ENCODE measurements at regions of chr7 and their contacts with region 1.

Region 1: DNA sequence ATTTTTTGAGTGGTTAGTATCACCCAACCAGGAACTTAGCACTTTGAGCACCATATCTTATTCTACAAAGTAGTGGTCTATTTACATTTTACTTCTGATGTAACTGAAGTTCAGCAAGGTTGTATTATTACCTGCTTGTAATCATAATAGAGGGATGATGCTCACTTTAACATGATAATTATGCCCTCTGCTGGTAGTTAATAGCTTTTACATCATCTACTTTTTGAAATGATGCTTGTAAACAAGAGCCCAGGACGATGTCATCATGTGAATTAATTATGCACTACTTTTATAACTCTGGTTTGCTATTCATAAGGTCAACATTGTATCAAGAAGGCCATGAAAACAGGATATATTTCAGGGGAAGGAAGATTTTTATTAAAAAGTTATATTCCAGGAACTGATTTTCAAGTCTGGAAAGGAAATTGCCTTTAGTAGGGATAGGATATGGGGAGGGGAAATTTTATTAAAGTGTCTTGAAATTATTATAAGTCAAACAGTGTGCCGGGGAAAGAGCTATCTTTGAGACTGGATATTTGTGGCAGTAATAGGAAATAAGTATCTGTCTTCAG is 80.3 kb upstream of the SCIN start:
- DNase-seq: no peak
- ATAC-seq: no peak

Region 2: GRCh38 chr7:11427686-11428273 is 1062.4 kb before region 1 on chr7:
- intact Hi-C with region 1: loop called (anchors 5 kb)
- DNase-seq: no peak
- ATAC-seq: no peak

Region 3: GRCh38 chr7:12067141-12067831 is 422.9 kb before region 1 on chr7:
- intact Hi-C with region 1: loop called (anchors 10 kb)
- DNase-seq: no peak
- ATAC-seq: no peak

Region 4: GRCh38 chr7:12119620-12120303 is 370.4 kb before region 1 on chr7:
- intact Hi-C with region 1: no loop called
- DNase-seq: no peak
- ATAC-seq: no peak

Region 5: GRCh38 chr7:12436896-12437535 is 53.2 kb before region 1 on chr7:
- intact Hi-C with region 1: loop called (anchors 2 kb)
- DNase-seq: no peak
- ATAC-seq: no peak

Region 6: GRCh38 chr7:12458520-12459131 is 31.6 kb before region 1 on chr7:
- intact Hi-C with region 1: loop called (anchors 5 kb)
- DNase-seq: no peak
- ATAC-seq: no peak

Region 7: GRCh38 chr7:12570534-12571461 is 80.6 kb after region 1 on chr7 and contains the start of gene SCIN:
- intact Hi-C with region 1: no loop called
- DNase-seq: peak; percentile 70
- ATAC-seq: peak; percentile 28
- total RNA-seq, gene SCIN: 0.08 TPM

Region 8: GRCh38 chr7:12670000-12670729 is 180.0 kb after region 1 on chr7:
- intact Hi-C with region 1: no loop called
- DNase-seq: no peak
- ATAC-seq: no peak

Measured in Right ventricle myocardium inferior (tissue), 1 donor.